ENCODE measurements at regions of chr2 and their contacts with region 1.

Region 1: DNA sequence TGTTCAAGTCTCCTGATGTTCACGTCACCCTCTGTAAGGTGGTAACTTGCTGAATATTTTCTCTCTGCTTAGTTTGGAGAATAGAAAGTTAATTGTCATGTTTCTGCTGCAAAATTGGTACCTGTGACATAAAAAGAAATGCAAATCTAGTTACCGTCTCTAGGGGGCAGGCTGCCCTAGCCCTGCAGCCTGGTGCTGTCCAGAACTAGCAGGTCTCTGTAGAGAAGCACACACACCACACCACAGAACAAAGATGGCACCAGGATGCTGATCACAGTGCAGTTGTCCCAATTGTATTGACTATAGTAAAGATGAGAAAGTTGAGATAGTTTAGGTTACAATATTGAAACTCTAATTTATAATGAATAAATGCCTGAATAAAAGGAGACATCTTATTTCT is 47.0 kb downstream of the SLC9A4 start:
- DNase-seq: peak; percentile 27
- H3K4me3 Mint-ChIP-seq: no peak overlapping the region
- H3K27ac Mint-ChIP-seq: no peak overlapping the region
- H3K4me1 Mint-ChIP-seq: peaks cover 72% of the 10 kb centered on the region
- H3K27me3 Mint-ChIP-seq: no peaks in the 10 kb centered on the region
- CTCF ChIP-seq: no peak

Region 2: GRCh38 chr2:102473020-102473419 is 47.0 kb before region 1 on chr2 and contains the start of gene SLC9A4:
- CTCF ChIA-PET with region 1: interaction called, 7 read pairs
- intact Hi-C with region 1: loop called (anchors 5 kb)
- DNase-seq: peak; percentile 74
- H3K4me3 Mint-ChIP-seq: no peak within 1 kb of the TSS
- H3K27ac Mint-ChIP-seq: no peak within 1 kb of the TSS
- H3K4me1 Mint-ChIP-seq: no peaks in the 10 kb centered on the region
- H3K27me3 Mint-ChIP-seq: peaks cover 22% of the 10 kb centered on the region
- CTCF ChIP-seq: peak; percentile 65
- total RNA-seq, gene SLC9A4: 0.12 and 0.22 TPM in 2 replicates

Region 3: GRCh38 chr2:102480285-102481195 is 39.5 kb before region 1 on chr2:
- CTCF ChIA-PET with region 1: no interaction called
- intact Hi-C with region 1: loop called (anchors 2 kb)
- DNase-seq: no peak
- H3K4me3 Mint-ChIP-seq: no peak overlapping the region
- H3K27ac Mint-ChIP-seq: no peak overlapping the region
- H3K4me1 Mint-ChIP-seq: no peaks in the 10 kb centered on the region
- H3K27me3 Mint-ChIP-seq: no peaks in the 10 kb centered on the region
- CTCF ChIP-seq: no peak

Region 4: GRCh38 chr2:102487761-102488466 is 32.1 kb before region 1 on chr2:
- CTCF ChIA-PET with region 1: interaction called, 6 read pairs
- intact Hi-C with region 1: loop called (anchors 2 kb)
- DNase-seq: peak; percentile 70
- H3K4me3 Mint-ChIP-seq: no peak overlapping the region
- H3K27ac Mint-ChIP-seq: peak overlapping the region; percentile 73
- H3K4me1 Mint-ChIP-seq: peaks cover 17% of the 10 kb centered on the region
- H3K27me3 Mint-ChIP-seq: no peaks in the 10 kb centered on the region
- CTCF ChIP-seq: no peak

Region 5: GRCh38 chr2:102592597-102592996 is 72.6 kb after region 1 on chr2:
- CTCF ChIA-PET with region 1: no interaction called
- intact Hi-C with region 1: loop called (anchors 2 kb)
- DNase-seq: peak; percentile 67
- H3K4me3 Mint-ChIP-seq: no peak overlapping the region
- H3K27ac Mint-ChIP-seq: no peak overlapping the region
- H3K4me1 Mint-ChIP-seq: peaks cover 49% of the 10 kb centered on the region
- H3K27me3 Mint-ChIP-seq: no peaks in the 10 kb centered on the region
- CTCF ChIP-seq: peak; percentile 60